ENCODE measurements at regions of chr9 and their contacts with region 1.

Region 1: DNA sequence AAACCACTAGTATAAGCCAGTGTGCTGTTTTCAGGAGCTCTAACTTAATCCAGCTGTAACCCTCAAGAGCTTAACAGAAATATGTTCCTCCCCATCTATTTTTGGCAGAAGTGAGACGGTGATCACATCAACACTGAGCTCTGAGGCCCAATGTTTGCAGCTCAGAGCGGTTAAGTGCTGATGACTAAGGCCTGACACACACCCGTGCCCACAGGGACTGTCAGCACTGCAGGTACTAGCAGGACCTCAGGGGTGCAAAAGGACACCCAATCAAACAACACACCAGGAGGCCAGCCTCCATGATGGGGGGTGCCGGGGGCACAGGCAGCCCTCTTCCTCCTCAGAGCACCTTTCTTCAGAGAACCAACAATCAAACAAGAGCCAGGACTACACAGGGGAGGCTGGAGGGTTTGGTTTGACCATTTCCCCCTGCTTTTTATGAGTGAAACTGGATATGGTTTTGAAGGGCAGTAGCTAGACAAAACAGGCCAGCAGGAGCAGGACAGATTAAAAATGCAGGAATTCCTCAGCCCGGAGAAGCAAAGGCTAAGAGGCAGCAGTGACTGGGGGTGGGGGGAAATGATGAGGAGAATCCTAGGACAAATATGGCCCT is 61.3 kb downstream of the RAPGEF1 start:
- DNase-seq: peak; percentile 47 to 90 (median 74)
- ATAC-seq: peak; percentile 89
- H3K4me3 ChIP-seq: no peak overlapping the region
- H3K4me3 Mint-ChIP-seq: peak overlapping the region; percentile 28
- H3K27ac ChIP-seq: peak overlapping the region; percentile 74 to 76
- H3K27ac Mint-ChIP-seq: peak overlapping the region; percentile 96
- H3K4me1 ChIP-seq: peaks cover 67% of the 10 kb centered on the region
- H3K4me1 Mint-ChIP-seq: peaks cover 93% of the 10 kb centered on the region
- H3K27me3 ChIP-seq: no peaks in the 10 kb centered on the region
- H3K27me3 Mint-ChIP-seq: no peaks in the 10 kb centered on the region
- CTCF ChIP-seq: no peak

Region 2: GRCh38 chr9:131590908-131591844 is 87.4 kb before region 1 on chr9:
- CTCF ChIA-PET with region 1: interaction called, 5 read pairs
- POLR2A ChIA-PET with region 1: interaction called, 3 read pairs
- intact Hi-C with region 1: loop called in 1 of 2 experiments (anchors 5 kb)
- DNase-seq: peak; percentile 64 to 87 (median 74)
- ATAC-seq: peak; percentile 89
- H3K4me3 ChIP-seq: no peak overlapping the region
- H3K4me3 Mint-ChIP-seq: no peak overlapping the region
- H3K27ac ChIP-seq: peak overlapping the region; percentile 4 to 34
- H3K27ac Mint-ChIP-seq: peak overlapping the region; percentile 78
- H3K4me1 ChIP-seq: peaks cover 25% of the 10 kb centered on the region
- H3K4me1 Mint-ChIP-seq: peaks cover 29% of the 10 kb centered on the region
- H3K27me3 ChIP-seq: no peaks in the 10 kb centered on the region
- H3K27me3 Mint-ChIP-seq: no peaks in the 10 kb centered on the region
- CTCF ChIP-seq: peak; percentile 83

Region 3: DNA sequence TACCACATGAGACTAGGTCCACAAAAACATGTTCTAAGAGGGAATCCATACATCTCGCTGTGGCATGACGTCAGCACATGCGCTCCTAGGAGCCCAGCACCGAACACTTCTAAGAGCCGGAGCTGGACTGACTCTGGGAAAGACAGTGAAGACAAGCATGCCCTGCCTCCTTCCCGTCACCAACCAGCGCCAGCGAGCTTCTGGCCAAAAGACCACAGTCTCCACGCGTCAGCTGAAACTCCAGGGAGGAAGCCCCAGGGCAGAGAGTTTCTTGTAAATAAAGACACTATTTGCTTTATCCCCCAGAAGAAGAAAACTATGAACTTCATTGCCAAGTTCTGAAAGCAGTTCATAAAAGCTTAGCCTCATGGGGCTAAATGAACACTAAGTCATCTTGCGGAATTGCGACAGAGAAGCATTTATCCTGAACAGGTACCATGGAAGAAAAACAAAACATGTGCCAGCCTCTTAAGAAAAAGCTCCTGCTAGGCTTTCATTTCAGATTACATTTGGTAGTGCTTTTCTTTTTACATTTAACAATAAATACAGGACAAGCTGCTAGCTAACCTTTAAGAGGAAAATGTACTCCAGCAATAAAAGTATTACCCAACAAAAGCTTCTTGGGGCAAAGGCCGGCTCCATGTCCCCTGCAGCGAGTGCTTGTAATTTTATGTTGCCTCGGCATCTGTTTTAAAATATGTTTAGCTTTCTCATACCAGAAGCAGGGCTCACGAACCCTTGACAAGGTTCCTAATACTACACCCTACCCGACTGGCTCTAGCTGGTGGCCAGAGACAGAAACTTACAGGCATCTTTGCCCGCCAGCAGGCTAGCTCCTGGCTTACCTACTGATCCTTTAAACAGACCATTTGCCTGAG is 36.7 kb before region 1 on chr9:
- CTCF ChIA-PET with region 1: no interaction called
- POLR2A ChIA-PET with region 1: interaction called, 10 read pairs
- intact Hi-C with region 1: no loop called
- DNase-seq: no peak
- ATAC-seq: no peak
- H3K4me3 ChIP-seq: no peak overlapping the region
- H3K4me3 Mint-ChIP-seq: no peak overlapping the region
- H3K27ac ChIP-seq: no peak overlapping the region
- H3K27ac Mint-ChIP-seq: peak overlapping the region; percentile 83
- H3K4me1 ChIP-seq: peaks cover 32% of the 10 kb centered on the region
- H3K4me1 Mint-ChIP-seq: peaks cover 32% of the 10 kb centered on the region
- H3K27me3 ChIP-seq: no peaks in the 10 kb centered on the region
- H3K27me3 Mint-ChIP-seq: no peaks in the 10 kb centered on the region
- CTCF ChIP-seq: no peak

Region 4: GRCh38 chr9:131692612-131693562 is 14.3 kb after region 1 on chr9:
- CTCF ChIA-PET with region 1: interaction called, 3 read pairs
- POLR2A ChIA-PET with region 1: interaction called, 19 read pairs
- intact Hi-C with region 1: no loop called
- DNase-seq: no peak
- ATAC-seq: no peak
- H3K4me3 ChIP-seq: no peak overlapping the region
- H3K4me3 Mint-ChIP-seq: no peak overlapping the region
- H3K27ac ChIP-seq: no peak overlapping the region
- H3K27ac Mint-ChIP-seq: peak overlapping the region; percentile 61
- H3K4me1 ChIP-seq: peaks cover 55% of the 10 kb centered on the region
- H3K4me1 Mint-ChIP-seq: peaks cover 93% of the 10 kb centered on the region
- H3K27me3 ChIP-seq: no peaks in the 10 kb centered on the region
- H3K27me3 Mint-ChIP-seq: no peaks in the 10 kb centered on the region
- CTCF ChIP-seq: no peak

Region 5: GRCh38 chr9:131733541-131734061 is 55.0 kb after region 1 on chr9:
- CTCF ChIA-PET with region 1: interaction called, 12 read pairs
- POLR2A ChIA-PET with region 1: interaction called, 43 read pairs
- intact Hi-C with region 1: loop called (anchors 2 to 5 kb)
- DNase-seq: peak in 7 of 14 experiments; percentile 31 to 77 (median 46)
- ATAC-seq: peak; percentile 10
- H3K4me3 ChIP-seq: peak overlapping the region; percentile 46
- H3K4me3 Mint-ChIP-seq: peak overlapping the region; percentile 83
- H3K27ac ChIP-seq: peak overlapping the region; percentile 72 to 86
- H3K27ac Mint-ChIP-seq: peak overlapping the region; percentile 86
- H3K4me1 ChIP-seq: peaks cover 99% of the 10 kb centered on the region
- H3K4me1 Mint-ChIP-seq: peaks cover 85% of the 10 kb centered on the region
- H3K27me3 ChIP-seq: no peaks in the 10 kb centered on the region
- H3K27me3 Mint-ChIP-seq: no peaks in the 10 kb centered on the region
- CTCF ChIP-seq: no peak

Region 6: DNA sequence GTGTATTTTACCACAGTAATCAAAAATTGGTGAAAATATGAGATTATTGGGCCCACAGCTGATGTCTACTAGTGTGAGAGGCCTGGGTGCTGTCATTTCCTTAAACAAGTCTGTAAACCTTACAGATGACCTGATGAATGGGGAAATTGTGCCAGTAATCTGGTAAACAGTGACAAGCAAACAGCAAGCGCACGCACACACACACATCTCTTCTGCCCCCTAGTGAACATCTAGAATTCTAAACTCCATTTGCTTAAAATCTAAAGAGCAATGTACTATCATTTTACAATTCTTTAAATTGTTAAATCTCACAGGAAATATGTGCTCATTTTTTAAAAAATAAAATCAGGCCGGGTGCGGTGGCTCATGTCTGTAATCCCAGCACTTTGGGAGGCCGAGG is 68.8 kb after region 1 on chr9:
- CTCF ChIA-PET with region 1: no interaction called
- POLR2A ChIA-PET with region 1: interaction called, 11 read pairs
- intact Hi-C with region 1: no loop called
- DNase-seq: peak in 5 of 14 experiments; percentile 13 to 78 (median 65)
- ATAC-seq: peak; percentile 30
- H3K4me3 ChIP-seq: no peak overlapping the region
- H3K4me3 Mint-ChIP-seq: no peak overlapping the region
- H3K27ac ChIP-seq: no peak overlapping the region
- H3K27ac Mint-ChIP-seq: peak overlapping the region; percentile 47
- H3K4me1 ChIP-seq: peaks cover 25% of the 10 kb centered on the region
- H3K4me1 Mint-ChIP-seq: peaks cover 32% of the 10 kb centered on the region
- H3K27me3 ChIP-seq: no peaks in the 10 kb centered on the region
- H3K27me3 Mint-ChIP-seq: no peaks in the 10 kb centered on the region
- CTCF ChIP-seq: peak; percentile 66

Region 7: DNA sequence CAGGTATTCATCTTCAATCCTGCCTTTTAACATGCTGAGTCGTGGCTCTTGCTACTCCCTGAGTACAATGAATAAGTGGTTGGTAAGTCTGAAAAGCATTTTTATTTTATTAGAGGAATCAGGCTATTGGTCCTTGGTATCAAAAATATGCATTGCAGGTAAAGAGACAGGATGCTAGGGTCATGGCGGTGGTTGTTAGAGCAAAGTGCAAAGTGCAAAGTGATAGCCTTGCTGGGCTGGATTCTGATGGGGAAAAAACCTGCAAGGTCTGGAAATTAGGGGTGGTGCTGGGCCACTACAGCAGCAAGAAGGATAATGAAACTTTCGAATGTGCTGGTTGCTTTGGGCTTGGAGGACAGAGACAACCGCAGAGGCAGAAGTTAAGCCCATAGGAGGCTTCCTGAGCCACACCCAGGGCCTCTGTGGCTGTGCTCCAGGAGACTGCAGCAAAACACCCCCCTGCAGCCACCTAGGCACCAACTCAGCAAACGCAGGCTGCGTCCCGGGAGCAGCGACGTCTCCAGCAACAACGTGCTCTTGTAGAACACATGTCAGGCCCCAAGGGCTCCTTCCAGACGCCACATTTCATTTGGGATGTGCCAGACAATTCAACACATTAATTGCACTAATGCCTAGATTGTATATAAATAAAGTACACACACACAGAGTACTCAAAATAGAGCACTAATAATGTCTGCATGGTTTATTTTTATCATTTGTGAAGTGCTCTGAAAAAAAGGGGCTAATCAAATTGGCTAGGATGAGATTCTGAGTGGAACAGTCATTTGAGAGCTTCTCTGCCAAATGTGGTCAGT is 211.0 kb after region 1 on chr9:
- CTCF ChIA-PET with region 1: no interaction called
- POLR2A ChIA-PET with region 1: no interaction called
- intact Hi-C with region 1: no loop called
- DNase-seq: no peak
- ATAC-seq: no peak
- H3K4me3 ChIP-seq: no peak overlapping the region
- H3K4me3 Mint-ChIP-seq: no peak overlapping the region
- H3K27ac ChIP-seq: no peak overlapping the region
- H3K27ac Mint-ChIP-seq: no peak overlapping the region
- H3K4me1 ChIP-seq: no peaks in the 10 kb centered on the region
- H3K4me1 Mint-ChIP-seq: no peaks in the 10 kb centered on the region
- H3K27me3 ChIP-seq: no peaks in the 10 kb centered on the region
- H3K27me3 Mint-ChIP-seq: no peaks in the 10 kb centered on the region
- CTCF ChIP-seq: no peak